AG04449 (cell line): ENCODE measurements at regions of chr6 and their contacts with region 1.

Region 1: DNA sequence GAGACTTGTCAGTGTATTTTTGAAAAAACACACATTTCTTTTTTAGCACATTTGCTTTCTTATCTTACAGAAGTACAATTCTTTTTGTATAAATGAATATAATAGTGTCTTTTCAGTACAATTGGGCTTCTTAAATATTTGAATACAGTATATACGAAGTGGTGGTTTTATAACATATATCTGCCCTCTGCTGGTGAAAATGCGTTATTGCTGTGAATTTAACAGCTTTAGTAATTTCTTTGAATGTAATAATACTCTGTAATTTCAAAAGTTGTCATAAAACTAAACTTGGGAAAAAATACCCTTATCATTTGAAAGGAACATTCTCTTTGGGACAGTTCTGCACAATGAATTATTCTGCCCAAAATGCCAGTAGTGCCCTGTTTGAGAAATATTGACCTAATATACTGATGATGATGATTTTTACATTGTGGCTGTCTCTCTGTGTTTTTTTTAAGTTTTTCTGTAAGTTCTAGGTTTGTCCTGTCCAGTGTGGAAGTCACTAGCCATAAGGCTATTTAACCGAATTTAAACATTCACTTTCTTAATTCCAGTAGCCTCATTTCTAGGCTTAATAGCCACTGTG is 19.0 kb downstream of the SMAP1 start:
- DNase-seq: no peak
- H3K4me3 ChIP-seq: no peak overlapping the region
- CTCF ChIP-seq: peak; percentile 31

Region 2: GRCh38 chr6:70210462-70210861 is 476.2 kb before region 1 on chr6:
- CTCF ChIA-PET with region 1: no interaction called
- POLR2A ChIA-PET with region 1: no interaction called
- DNase-seq: no peak
- H3K4me3 ChIP-seq: no peak overlapping the region
- CTCF ChIP-seq: no peak

Region 3: GRCh38 chr6:70520575-70520974 is 166.1 kb before region 1 on chr6:
- CTCF ChIA-PET with region 1: interaction called, 33 read pairs
- POLR2A ChIA-PET with region 1: no interaction called
- DNase-seq: no peak
- H3K4me3 ChIP-seq: no peak overlapping the region
- CTCF ChIP-seq: no peak

Region 4: DNA sequence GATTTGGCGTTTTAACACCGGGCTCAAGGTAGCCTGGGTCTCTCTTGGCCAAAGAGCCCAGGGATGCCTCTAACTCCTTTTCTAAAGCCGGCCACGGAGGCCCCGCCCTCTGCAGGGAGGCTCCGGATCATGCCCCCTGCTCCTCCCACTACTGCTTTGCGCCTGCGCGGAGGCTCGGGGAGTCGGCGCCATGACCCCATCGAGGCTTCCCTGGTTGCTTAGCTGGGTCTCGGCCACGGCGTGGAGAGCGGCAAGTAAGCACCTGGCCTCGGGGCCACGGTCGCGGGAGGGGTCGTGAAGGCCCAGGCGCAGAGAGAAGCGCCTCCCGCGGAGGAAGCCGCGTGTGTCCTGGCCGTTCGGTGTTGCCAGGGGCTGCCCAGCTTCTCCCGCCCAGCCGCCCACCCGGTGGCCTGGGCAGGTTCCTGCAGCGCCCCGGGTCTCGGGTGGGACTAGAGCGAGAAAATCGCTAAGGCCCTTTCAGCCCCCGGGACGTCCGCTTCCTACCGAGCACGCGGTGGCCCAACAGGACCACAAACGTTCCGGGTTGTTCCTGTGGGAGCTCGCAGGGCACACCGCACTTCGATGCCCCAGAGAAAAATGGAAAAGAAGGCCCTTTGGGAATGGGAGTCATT is 119.8 kb before region 1 on chr6 and contains the start of gene SDHAF4:
- CTCF ChIA-PET with region 1: interaction called, 11 read pairs
- POLR2A ChIA-PET with region 1: interaction called, 3 read pairs
- DNase-seq: no peak
- H3K4me3 ChIP-seq: peak within 1 kb of the TSS; percentile 89
- CTCF ChIP-seq: peak; percentile 10

Region 5: GRCh38 chr6:70673601-70674000 is 13.0 kb before region 1 on chr6:
- CTCF ChIA-PET with region 1: interaction called, 24 read pairs
- POLR2A ChIA-PET with region 1: no interaction called
- DNase-seq: no peak
- H3K4me3 ChIP-seq: no peak overlapping the region
- CTCF ChIP-seq: no peak

Region 6: GRCh38 chr6:70706491-70707123 is 20.0 kb after region 1 on chr6:
- CTCF ChIA-PET with region 1: interaction called, 13 read pairs
- POLR2A ChIA-PET with region 1: no interaction called
- DNase-seq: no peak
- H3K4me3 ChIP-seq: no peak overlapping the region
- CTCF ChIP-seq: no peak